Stomach (tissue), 19 donors: ENCODE measurements at regions of chr6 and their contacts with region 1.

Region 1: DNA sequence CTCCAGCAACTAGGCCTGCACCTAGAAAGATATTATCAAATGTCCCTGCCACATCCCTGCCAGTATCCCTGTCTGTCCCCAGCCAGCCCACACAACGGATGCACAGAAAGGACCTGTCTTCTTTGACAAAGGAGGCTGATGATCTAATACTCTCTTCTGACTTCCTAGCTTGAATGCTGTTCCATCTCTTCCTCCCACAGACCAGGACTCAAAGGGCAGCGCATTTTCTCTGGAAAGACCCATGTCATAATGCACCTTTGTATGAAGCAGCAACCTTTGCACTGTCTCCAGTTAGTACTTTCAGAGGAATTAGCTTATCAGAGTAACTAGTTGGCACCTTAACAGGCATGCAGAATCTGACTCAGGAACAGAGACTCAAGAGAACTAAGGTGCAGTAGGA is 53.3 kb upstream of the TAF8 start:
- DNase-seq: peak in 1 of 2 donors; percentile 31
- H3K4me3 ChIP-seq: no peak overlapping the region
- H3K27ac ChIP-seq: no peak overlapping the region
- H3K4me1 ChIP-seq: peaks cover 0 to 4% (median 0%) of the 10 kb centered on the region in 4 donors
- H3K27me3 ChIP-seq: no peaks in the 10 kb centered on the region
- CTCF ChIP-seq: no peak
- EP300 ChIP-seq: no peak
- POLR2A ChIP-seq: no peak

Region 2: GRCh38 chr6:41850861-41851260 is 146.1 kb before region 1 on chr6:
- intact Hi-C with region 1: no loop called
- DNase-seq: no peak
- H3K4me3 ChIP-seq: no peak overlapping the region
- H3K27ac ChIP-seq: no peak overlapping the region
- H3K4me1 ChIP-seq: peaks cover 0 to 13% (median 4%) of the 10 kb centered on the region in 4 donors
- H3K27me3 ChIP-seq: no peaks in the 10 kb centered on the region
- CTCF ChIP-seq: no peak
- EP300 ChIP-seq: no peak
- POLR2A ChIP-seq: no peak

Region 3: DNA sequence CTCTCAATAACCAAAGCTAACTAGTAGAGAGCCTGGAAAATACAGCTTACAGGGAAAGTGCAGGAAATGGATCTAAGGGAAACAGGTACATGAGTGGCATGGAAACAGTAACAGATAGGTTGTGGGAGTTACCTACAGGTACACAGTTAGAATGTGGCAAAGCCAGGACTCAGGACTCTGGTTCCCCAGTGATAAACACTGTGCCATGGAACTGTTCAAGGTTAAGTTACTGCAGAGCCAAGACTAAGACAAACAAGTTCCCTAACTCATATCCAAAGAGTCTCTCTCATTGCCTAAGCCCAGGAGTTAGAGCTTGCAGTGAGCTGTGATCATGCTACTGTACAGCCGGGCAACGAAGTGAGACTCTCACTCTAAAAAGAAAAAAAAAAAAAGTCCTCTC is 82.7 kb before region 1 on chr6:
- intact Hi-C with region 1: no loop called
- DNase-seq: no peak
- H3K4me3 ChIP-seq: no peak overlapping the region
- H3K27ac ChIP-seq: no peak overlapping the region
- H3K4me1 ChIP-seq: peaks cover 0 to 30% (median 4%) of the 10 kb centered on the region in 4 donors
- H3K27me3 ChIP-seq: no peaks in the 10 kb centered on the region
- CTCF ChIP-seq: no peak
- EP300 ChIP-seq: no peak
- POLR2A ChIP-seq: no peak

Region 4: DNA sequence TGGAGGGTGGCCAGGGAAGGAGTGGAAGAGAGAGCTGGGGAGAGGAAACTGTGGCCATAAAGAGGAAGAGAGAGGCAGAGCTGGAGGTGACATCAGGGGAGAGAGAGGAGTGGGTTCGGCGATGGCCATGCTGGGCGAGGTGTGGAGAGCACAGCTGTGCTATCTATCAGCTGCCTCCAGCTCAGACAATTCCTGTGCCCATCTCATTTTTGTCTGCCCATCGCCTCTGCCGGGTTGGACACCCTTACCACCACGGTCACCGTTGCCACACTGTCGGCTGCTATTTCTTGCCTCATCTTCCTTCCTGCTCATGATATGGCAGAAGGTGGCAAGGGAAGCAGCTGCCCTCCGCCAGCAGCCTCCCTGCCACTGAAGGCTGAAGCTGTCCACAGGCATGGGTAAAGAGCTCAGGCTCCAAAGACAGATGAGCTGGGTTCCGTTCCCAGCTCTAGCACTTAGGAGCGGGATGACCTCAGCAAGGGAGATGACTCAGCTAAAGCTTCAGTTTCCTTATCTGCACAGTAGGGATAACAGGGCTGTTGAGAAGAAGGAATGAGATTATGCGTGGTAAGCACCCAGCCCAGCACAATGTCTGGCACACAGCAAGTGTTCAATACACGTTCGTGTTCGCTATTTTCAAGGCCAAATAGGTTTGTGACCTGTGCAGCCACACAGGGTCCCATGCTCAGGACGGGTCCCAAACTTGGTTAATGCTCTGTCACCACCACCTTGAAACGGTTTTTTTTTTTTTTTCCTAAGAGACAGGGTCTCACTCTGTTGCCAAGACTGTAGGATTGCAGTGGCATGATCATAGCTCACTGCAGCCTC is 31.5 kb after region 1 on chr6:
- intact Hi-C with region 1: loop called (anchors 5 kb)
- DNase-seq: peak in 1 of 2 donors; percentile 19
- H3K4me3 ChIP-seq: no peak overlapping the region
- H3K27ac ChIP-seq: peak overlapping the region in 2 of 5 donors; percentile 58 to 73
- H3K4me1 ChIP-seq: peaks cover 13 to 85% (median 26%) of the 10 kb centered on the region in 4 donors
- H3K27me3 ChIP-seq: no peaks in the 10 kb centered on the region
- CTCF ChIP-seq: no peak
- EP300 ChIP-seq: no peak
- POLR2A ChIP-seq: no peak

Region 5: GRCh38 chr6:43347021-43347420 is 1350.0 kb after region 1 on chr6:
- intact Hi-C with region 1: no loop called
- DNase-seq: no peak
- H3K4me3 ChIP-seq: no peak overlapping the region
- H3K27ac ChIP-seq: no peak overlapping the region
- H3K4me1 ChIP-seq: no peaks in the 10 kb centered on the region
- H3K27me3 ChIP-seq: no peaks in the 10 kb centered on the region
- CTCF ChIP-seq: no peak
- EP300 ChIP-seq: no peak
- POLR2A ChIP-seq: no peak